Activated T-helper 2 cell treated with anti-CD3 and anti-CD28 coated beads, Interferon-gamma antibody, Interleukin-2, Interleukin-4, amounts not matched to agents 10 μg/mL and 5 μg/mL and 100 μg/mL, durations not matched to agents 14 hours and 24 hours and 36 hours (primary cell): ENCODE measurements at regions of chr15 and their contacts with region 1.

Region 1: DNA sequence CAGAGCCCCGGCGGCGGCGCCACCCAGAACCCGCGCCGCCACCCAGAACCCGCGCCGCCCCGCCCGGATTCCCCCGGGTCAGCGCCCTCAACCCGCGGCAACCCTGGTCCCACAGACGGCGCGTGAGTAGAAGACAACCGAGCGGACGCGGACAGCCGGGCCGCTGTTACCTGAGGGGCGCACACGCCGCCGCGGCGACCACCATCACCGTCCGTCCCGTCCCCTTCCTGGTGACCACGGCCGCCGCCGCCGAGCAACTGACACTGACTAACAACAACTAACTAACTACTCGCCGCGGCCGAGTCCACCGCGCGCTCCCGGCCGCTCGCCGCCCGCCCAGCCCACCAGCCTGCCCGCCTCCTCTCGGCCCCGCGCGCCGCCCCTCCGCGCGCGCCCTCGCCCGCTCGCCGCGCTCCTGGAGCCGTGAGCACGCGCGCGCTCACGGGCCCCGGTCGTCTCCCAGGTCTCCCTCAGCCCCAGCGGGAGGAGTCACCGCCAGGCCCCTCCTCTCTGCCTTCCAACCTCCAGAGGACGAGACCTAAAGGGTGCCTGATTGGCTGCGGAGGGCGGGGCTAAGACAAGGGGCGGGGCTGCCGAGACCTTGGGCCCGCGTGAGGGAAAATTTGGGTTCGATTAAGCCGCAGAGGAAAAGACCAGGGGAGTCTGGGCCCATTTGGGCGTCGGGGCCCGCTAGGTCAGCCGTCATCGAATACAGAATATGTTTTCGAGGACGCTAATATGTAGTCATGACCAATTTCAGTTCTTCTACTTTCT is at the start of gene PEAK1:
- DNase-seq: peak; percentile 98
- H3K4me3 Mint-ChIP-seq: peak within 1 kb of the TSS; percentile 96
- H3K27ac Mint-ChIP-seq: peak within 1 kb of the TSS; percentile 97
- H3K4me1 Mint-ChIP-seq: peaks cover 35% of the 10 kb centered on the region
- H3K27me3 Mint-ChIP-seq: no peaks in the 10 kb centered on the region
- total RNA-seq, gene PEAK1: 26.0 and 27.0 TPM in 2 replicates

Region 2: GRCh38 chr15:77295446-77295845 is 124.6 kb before region 1 on chr15:
- intact Hi-C with region 1: no loop called
- DNase-seq: no peak
- H3K4me3 Mint-ChIP-seq: no peak overlapping the region
- H3K27ac Mint-ChIP-seq: no peak overlapping the region
- H3K4me1 Mint-ChIP-seq: peaks cover 6% of the 10 kb centered on the region
- H3K27me3 Mint-ChIP-seq: no peaks in the 10 kb centered on the region

Region 3: GRCh38 chr15:77402740-77403379 is 17.2 kb before region 1 on chr15:
- intact Hi-C with region 1: loop called (anchors 2 kb)
- DNase-seq: no peak
- H3K4me3 Mint-ChIP-seq: no peak overlapping the region
- H3K27ac Mint-ChIP-seq: peak overlapping the region; percentile 33
- H3K4me1 Mint-ChIP-seq: peaks cover 37% of the 10 kb centered on the region
- H3K27me3 Mint-ChIP-seq: no peaks in the 10 kb centered on the region

Region 4: GRCh38 chr15:77455696-77456321 is 35.8 kb after region 1 on chr15:
- intact Hi-C with region 1: loop called (anchors 5 kb)
- DNase-seq: no peak
- H3K4me3 Mint-ChIP-seq: no peak overlapping the region
- H3K27ac Mint-ChIP-seq: peak overlapping the region; percentile 30
- H3K4me1 Mint-ChIP-seq: peaks cover 23% of the 10 kb centered on the region
- H3K27me3 Mint-ChIP-seq: no peaks in the 10 kb centered on the region